ENCODE measurements at regions of chr3 and their contacts with region 1.

Region 1: GRCh38 chr3:177190756-177191681 is 6.3 kb downstream of the TBL1XR1 start:
- DNase-seq: no peak
- ATAC-seq: peak; percentile 56
- H3K4me3 ChIP-seq: peak overlapping the region; percentile 42
- H3K27ac ChIP-seq: no peak overlapping the region
- H3K4me1 ChIP-seq: peaks cover 3% of the 10 kb centered on the region; the same call in 1 of the 2 replicates
- H3K27me3 ChIP-seq: no peaks in the 10 kb centered on the region
- CTCF ChIP-seq: no peak
- EP300 ChIP-seq: no peak
- POLR2A ChIP-seq: no peak
- RAD21 ChIP-seq: no peak

Region 2: DNA sequence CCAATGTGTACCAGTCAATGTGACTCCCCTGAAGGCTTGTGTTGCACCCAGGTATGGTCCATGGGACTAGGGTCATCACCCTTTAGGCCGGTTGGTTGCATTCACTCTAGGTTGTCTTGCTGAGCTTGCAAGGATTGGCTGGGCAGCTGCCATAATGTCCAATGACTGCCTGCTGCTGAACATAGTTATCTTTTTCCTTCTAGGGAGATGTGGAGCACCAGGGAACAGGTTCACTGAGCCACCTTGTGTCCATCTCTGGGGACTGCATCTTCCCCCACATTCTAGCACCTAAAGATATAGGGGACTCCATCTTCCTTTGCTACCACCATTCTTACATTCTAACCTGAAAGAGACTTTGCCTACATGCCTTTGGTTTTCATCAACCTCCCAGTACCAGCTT is 586.7 kb after region 1 on chr3:
- CTCF ChIA-PET with region 1: no interaction called
- POLR2A ChIA-PET with region 1: no interaction called
- RAD21 ChIA-PET with region 1: no interaction called
- SMC1A ChIA-PET with region 1: no interaction called
- in situ Hi-C with region 1: no loop called
- intact Hi-C with region 1: loop called (anchors 5 kb)
- DNase-seq: peak; percentile 20
- ATAC-seq: peak; percentile 97
- H3K4me3 ChIP-seq: no peak overlapping the region
- H3K27ac ChIP-seq: no peak overlapping the region
- H3K4me1 ChIP-seq: no peaks in the 10 kb centered on the region; the same call in 1 of the 2 replicates
- H3K27me3 ChIP-seq: no peaks in the 10 kb centered on the region
- CTCF ChIP-seq: peak; percentile 74 to 80 (median 78)
- EP300 ChIP-seq: no peak
- POLR2A ChIP-seq: no peak
- RAD21 ChIP-seq: peak; percentile 87